Activated naive CD4-positive, alpha-beta T cell treated with anti-CD3 and anti-CD28 coated beads for 36 hours (primary cell): ENCODE measurements at regions of chr2 and their contacts with region 1.

Region 1: GRCh38 chr2:88055371-88056128 is at the start of gene KRCC1:
- DNase-seq: peak; percentile 94
- H3K4me3 Mint-ChIP-seq: peak within 1 kb of the TSS; percentile 99
- H3K27ac Mint-ChIP-seq: peak within 1 kb of the TSS; percentile 98
- H3K4me1 Mint-ChIP-seq: peaks cover 62% of the 10 kb centered on the region
- H3K27me3 Mint-ChIP-seq: no peaks in the 10 kb centered on the region
- total RNA-seq, gene KRCC1: 2.4 to 2.5 TPM

Region 2: DNA sequence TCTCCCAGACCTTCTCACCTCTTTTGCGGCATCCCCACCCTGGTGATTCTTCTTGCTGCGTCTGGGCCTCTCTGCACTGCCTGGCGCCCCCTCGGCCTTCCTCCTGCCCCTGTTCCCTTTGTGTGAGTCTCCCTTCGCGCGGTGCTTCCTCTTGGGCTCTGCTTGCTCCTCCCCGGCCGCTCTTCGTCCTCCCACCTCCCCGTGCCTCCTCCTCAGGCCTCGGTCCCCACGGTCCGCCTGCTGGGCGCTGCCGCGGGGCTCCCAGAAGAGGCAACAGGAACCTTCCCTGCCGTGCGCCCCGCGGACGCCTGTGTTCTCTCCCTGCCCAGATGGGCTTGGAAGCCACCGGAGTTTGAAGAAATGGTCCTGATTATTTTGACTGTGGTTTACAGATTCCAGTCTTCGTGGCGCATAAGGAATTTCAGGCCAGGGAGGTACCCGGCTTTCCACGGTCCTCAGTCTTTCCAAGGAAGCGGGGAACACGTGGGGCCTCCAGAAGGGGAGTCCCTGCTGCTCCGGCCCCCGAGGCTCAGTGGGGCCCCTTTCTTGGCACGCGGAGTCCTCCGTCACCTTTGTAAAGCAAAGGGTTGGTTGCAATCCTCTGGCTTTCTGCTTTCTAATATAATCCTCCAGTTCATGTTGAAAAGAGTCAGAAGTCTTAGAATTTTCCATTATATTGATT is 52.3 kb before region 1 on chr2:
- CTCF ChIA-PET with region 1: interaction called, 11 read pairs
- intact Hi-C with region 1: no loop called
- DNase-seq: no peak
- H3K4me3 Mint-ChIP-seq: no peak overlapping the region
- H3K27ac Mint-ChIP-seq: no peak overlapping the region
- H3K4me1 Mint-ChIP-seq: peaks cover 6% of the 10 kb centered on the region
- H3K27me3 Mint-ChIP-seq: no peaks in the 10 kb centered on the region

Region 3: GRCh38 chr2:88038263-88039105 is 17.1 kb before region 1 on chr2:
- CTCF ChIA-PET with region 1: interaction called, 4 read pairs
- intact Hi-C with region 1: loop called (anchors 1 kb)
- DNase-seq: no peak
- H3K4me3 Mint-ChIP-seq: no peak overlapping the region
- H3K27ac Mint-ChIP-seq: peak overlapping the region; percentile 62
- H3K4me1 Mint-ChIP-seq: peaks cover 42% of the 10 kb centered on the region
- H3K27me3 Mint-ChIP-seq: no peaks in the 10 kb centered on the region

Region 4: GRCh38 chr2:88133875-88134274 is 78.3 kb after region 1 on chr2:
- CTCF ChIA-PET with region 1: interaction called, 11 read pairs
- intact Hi-C with region 1: no loop called
- DNase-seq: no peak
- H3K4me3 Mint-ChIP-seq: no peak overlapping the region
- H3K27ac Mint-ChIP-seq: no peak overlapping the region
- H3K4me1 Mint-ChIP-seq: no peaks in the 10 kb centered on the region
- H3K27me3 Mint-ChIP-seq: peaks cover 6% of the 10 kb centered on the region

Region 5: DNA sequence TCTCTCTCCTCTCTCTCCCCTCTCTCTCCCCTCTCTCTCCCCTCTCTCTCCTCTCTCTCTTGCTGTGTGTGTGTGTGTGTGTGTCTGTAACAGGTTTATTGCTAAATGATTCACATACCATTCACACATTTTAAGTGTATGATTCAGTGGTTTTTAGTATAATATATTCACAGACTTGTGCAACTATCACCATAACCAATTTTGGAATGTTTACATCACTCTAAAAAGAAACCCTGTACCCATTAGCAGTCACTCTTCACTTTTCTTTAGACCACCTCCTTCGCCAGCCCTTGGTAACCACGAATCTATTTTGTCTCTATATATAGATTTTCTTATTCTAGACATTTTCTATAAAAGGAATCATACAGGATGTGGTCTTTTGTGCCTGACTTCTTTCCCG is 126.0 kb after region 1 on chr2:
- CTCF ChIA-PET with region 1: interaction called, 14 read pairs
- intact Hi-C with region 1: no loop called
- DNase-seq: peak; percentile 45
- H3K4me3 Mint-ChIP-seq: peak overlapping the region; percentile 6
- H3K27ac Mint-ChIP-seq: peak overlapping the region; percentile 84
- H3K4me1 Mint-ChIP-seq: peaks cover 18% of the 10 kb centered on the region
- H3K27me3 Mint-ChIP-seq: peaks cover 2% of the 10 kb centered on the region

Region 6: GRCh38 chr2:88451811-88452565 is 396.4 kb after region 1 on chr2:
- CTCF ChIA-PET with region 1: interaction called, 3 read pairs
- intact Hi-C with region 1: loop called (anchors 2 kb)
- DNase-seq: peak; percentile 23
- H3K4me3 Mint-ChIP-seq: peak overlapping the region; percentile 63
- H3K27ac Mint-ChIP-seq: no peak overlapping the region
- H3K4me1 Mint-ChIP-seq: peaks cover 5% of the 10 kb centered on the region
- H3K27me3 Mint-ChIP-seq: peaks cover 59% of the 10 kb centered on the region

Region 7: DNA sequence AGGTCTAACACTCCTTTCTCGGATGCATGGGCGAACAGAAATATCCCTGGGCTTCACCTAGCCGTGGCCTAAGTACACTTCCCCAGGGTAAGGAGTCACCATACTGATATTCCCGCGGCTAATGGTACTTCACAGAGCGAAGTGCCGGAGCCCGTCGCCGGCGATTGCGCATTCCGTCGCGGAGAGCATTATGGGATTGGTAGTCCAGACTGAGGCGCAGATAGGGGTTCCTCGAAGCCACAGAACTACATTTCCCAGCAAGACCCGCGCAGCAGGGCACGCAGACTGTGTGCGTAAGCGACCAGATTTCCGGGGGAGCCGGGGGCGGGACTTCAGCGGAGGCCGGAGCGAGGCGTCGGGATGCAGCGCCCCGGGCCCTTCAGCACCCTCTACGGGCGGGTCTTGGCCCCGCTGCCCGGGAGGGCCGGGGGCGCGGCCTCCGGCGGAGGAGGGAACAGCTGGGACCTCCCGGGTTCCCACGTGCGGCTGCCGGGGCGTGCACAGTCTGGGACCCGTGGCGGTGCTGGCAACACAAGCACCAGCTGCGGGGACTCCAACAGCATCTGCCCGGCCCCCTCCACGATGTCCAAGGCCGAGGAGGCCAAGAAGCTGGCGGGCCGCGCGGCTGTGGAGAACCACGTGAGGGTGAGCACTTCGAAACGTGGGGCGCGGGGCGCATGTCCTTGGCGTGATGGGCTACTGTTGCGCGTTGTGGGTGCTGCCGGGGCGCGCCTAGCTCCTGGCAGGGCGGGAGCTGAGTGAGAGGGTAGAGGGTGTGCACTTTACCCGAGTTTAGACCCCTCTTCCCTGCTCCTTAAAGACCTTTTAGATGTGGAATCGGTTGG is 636.0 kb after region 1 on chr2 and contains the start of gene RPIA:
- CTCF ChIA-PET with region 1: no interaction called
- intact Hi-C with region 1: loop called (anchors 10 kb)
- DNase-seq: peak; percentile 99
- H3K4me3 Mint-ChIP-seq: peak within 1 kb of the TSS; percentile 93
- H3K27ac Mint-ChIP-seq: peak within 1 kb of the TSS; percentile 91
- H3K4me1 Mint-ChIP-seq: peaks cover 50% of the 10 kb centered on the region
- H3K27me3 Mint-ChIP-seq: no peaks in the 10 kb centered on the region
- total RNA-seq, gene RPIA: 67.3 to 70.0 TPM